Gastrocnemius medialis (tissue), 4 donors: ENCODE measurements at regions of chr16 and their contacts with region 1.

Region 1: GRCh38 chr16:86575754-86576557 is 2.4 kb upstream of the FOXL1 start:
- DNase-seq: peak; percentile 48 to 58
- ATAC-seq: peak; percentile 80 to 82
- H3K4me3 ChIP-seq: peak overlapping the region; percentile 46 to 70 (median 62)
- H3K27ac ChIP-seq: peak overlapping the region; percentile 64 to 78 (median 72)
- H3K4me1 ChIP-seq: peaks cover 0 to 4% of the 10 kb centered on the region in 2 donors
- H3K27me3 ChIP-seq: peaks cover 59 to 64% (median 62%) of the 10 kb centered on the region in 3 donors
- CTCF ChIP-seq: peak; percentile 39 to 83 (median 52)
- POLR2A ChIP-seq: peak; percentile 65 to 89

Region 2: DNA sequence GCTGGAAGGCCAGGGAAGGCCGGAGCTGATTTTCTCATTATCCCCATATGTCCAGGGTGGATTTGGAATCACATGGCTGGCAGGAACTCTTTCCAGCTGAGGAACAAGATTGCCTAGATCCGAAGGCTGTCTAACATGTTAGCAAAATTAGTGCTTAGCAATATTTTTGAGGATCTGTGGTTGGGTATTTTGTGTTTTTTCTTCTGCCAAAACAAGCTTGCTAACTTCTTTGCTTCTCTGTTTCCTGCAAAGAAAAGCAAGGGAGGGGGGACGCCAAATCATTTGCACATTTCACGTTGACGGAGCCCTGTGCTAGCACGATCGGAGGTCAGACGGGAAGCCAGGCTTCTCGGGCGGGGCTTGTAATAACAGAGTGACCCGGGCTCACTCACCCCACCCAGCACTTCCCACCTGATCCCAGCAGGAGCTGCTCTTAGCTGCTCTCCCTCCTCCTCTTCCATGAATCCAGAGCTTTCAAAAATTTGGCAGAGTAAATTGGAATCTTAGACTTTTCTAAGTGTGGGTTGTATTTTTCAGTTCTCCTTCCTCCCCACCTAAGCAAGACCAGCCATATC is 98.9 kb before region 1 on chr16:
- in situ Hi-C with region 1: no loop called
- intact Hi-C with region 1: no loop called
- DNase-seq: no peak
- ATAC-seq: no peak
- H3K4me3 ChIP-seq: no peak overlapping the region
- H3K27ac ChIP-seq: no peak overlapping the region
- H3K4me1 ChIP-seq: no peaks in the 10 kb centered on the region
- H3K27me3 ChIP-seq: peaks cover 31 to 71% (median 47%) of the 10 kb centered on the region in 3 donors
- CTCF ChIP-seq: no peak
- POLR2A ChIP-seq: no peak

Region 3: GRCh38 chr16:86609115-86609514 is 33.2 kb after region 1 on chr16:
- in situ Hi-C with region 1: no loop called
- intact Hi-C with region 1: loop called (anchors 2 kb)
- DNase-seq: no peak
- ATAC-seq: no peak
- H3K4me3 ChIP-seq: no peak overlapping the region
- H3K27ac ChIP-seq: peak overlapping the region; percentile 72 to 90 (median 80)
- H3K4me1 ChIP-seq: peaks cover 29 to 40% of the 10 kb centered on the region in 2 donors
- H3K27me3 ChIP-seq: no peaks in the 10 kb centered on the region
- CTCF ChIP-seq: no peak
- POLR2A ChIP-seq: no peak

Region 4: DNA sequence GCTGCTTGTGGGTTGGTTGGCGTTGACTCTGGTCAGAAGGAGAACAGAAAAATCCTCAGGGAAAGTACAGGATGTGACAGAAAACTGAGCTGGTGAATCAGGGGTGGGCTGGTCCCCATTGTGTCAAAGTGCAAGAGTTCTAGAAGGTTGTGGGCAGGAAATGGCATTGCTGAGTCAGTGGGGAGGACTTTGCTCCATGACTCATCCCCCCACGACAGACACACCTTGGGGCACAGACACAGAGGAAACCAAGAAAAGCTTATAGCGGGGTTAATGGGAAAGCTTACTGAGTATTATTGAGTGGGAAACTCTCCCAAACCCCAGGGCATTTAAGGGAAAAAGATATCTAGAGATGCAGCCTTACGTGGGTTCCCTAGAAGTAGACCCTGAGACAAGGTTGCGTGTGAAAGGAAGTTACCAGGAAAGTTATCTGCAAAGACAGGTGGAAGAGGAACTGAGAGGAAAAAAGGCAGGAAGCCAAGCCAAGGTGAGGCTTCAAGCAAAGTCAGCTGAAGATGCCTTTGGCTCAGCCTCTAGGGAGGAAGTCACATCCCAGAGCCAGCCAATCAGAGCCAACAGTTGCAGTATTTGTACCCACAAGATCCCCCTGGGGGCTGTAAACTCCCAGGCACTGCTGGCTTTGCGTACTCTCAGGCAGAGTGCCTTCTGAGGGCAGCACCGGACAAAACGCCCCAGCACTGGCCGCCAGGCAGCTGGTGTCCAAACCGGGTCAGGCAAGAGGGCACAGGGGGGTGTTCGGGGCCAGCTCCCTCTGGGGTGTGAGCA is 88.8 kb after region 1 on chr16:
- in situ Hi-C with region 1: no loop called
- intact Hi-C with region 1: loop called (anchors 5 kb)
- DNase-seq: peak; percentile 56 to 73
- ATAC-seq: peak; percentile 34 to 37
- H3K4me3 ChIP-seq: peak overlapping the region in 2 of 4 donors; percentile 29 to 37
- H3K27ac ChIP-seq: peak overlapping the region; percentile 82 to 96 (median 90)
- H3K4me1 ChIP-seq: peaks cover 55 to 93% of the 10 kb centered on the region in 2 donors
- H3K27me3 ChIP-seq: no peaks in the 10 kb centered on the region
- CTCF ChIP-seq: no peak
- POLR2A ChIP-seq: peak in 1 of 2 donors; percentile 26

Region 5: DNA sequence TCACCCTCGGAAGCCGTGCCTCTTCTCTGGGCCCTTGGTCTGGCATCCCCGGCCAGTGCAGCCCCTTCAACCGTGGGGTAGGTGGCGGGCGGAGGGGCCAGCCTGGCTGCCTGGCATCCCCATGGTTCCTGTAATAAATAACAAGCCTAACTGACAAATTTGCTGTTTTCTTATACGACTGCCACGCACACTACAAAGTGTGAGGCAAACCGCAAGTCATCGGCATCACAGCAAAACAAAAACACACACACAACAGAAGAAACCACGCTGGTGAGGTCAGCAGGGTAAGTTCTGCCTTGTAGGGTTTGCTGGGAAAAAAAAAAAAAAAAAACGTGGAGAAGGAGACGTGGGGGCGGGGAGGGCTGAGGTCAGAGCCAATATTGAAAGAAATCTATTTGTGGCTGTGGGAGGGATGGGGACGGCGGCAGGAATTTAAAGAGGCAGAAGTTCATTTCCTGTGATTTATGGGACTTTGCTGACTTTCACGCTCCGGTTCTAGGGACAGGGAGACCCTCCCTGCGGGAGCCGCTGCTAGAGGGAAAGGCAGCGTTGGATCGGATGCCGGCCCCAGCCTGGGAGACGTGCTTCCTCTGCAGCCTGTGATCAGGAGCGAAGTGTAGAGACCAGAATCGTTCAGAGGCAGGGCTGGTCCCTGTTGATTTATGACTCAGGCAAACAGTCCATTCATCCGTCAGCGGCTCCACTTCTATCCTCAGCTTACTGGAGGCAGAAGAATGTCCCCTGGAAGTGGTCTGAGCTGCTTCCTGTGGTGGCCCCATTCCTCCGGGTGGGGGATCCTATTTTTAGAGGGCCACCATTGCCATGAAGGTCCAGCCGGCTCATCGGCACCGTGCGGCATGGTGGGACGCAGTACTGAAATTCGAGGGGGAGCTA is 165.2 kb after region 1 on chr16:
- in situ Hi-C with region 1: no loop called
- intact Hi-C with region 1: loop called (anchors 5 kb)
- DNase-seq: peak; percentile 31 to 58
- ATAC-seq: peak; percentile 85 to 86
- H3K4me3 ChIP-seq: peak overlapping the region; percentile 43 to 56 (median 52)
- H3K27ac ChIP-seq: peak overlapping the region; percentile 77 to 88 (median 84)
- H3K4me1 ChIP-seq: peaks cover 9 to 19% of the 10 kb centered on the region in 2 donors
- H3K27me3 ChIP-seq: no peaks in the 10 kb centered on the region
- CTCF ChIP-seq: no peak
- POLR2A ChIP-seq: peak; percentile 16 to 37

Region 6: GRCh38 chr16:86761111-86762031 is 185.4 kb after region 1 on chr16:
- in situ Hi-C with region 1: loop called in 3 of 4 experiments (anchors 10 to 25 kb)
- intact Hi-C with region 1: loop called (anchors 2 kb)
- DNase-seq: no peak
- ATAC-seq: peak; percentile 53 to 62
- H3K4me3 ChIP-seq: no peak overlapping the region
- H3K27ac ChIP-seq: no peak overlapping the region
- H3K4me1 ChIP-seq: no peaks in the 10 kb centered on the region
- H3K27me3 ChIP-seq: peaks cover 19 to 58% (median 38%) of the 10 kb centered on the region in 3 donors
- CTCF ChIP-seq: peak; percentile 44 to 76 (median 72)
- POLR2A ChIP-seq: no peak

Region 7: GRCh38 chr16:86865524-86866301 is 289.8 kb after region 1 on chr16:
- in situ Hi-C with region 1: no loop called
- intact Hi-C with region 1: loop called (anchors 5 kb)
- DNase-seq: peak; percentile 62 to 78
- ATAC-seq: peak; percentile 88 to 93
- H3K4me3 ChIP-seq: no peak overlapping the region
- H3K27ac ChIP-seq: peak overlapping the region; percentile 41 to 62 (median 54)
- H3K4me1 ChIP-seq: peaks cover 8 to 15% of the 10 kb centered on the region in 2 donors
- H3K27me3 ChIP-seq: no peaks in the 10 kb centered on the region
- CTCF ChIP-seq: peak in 1 of 5 experiments; percentile 23
- POLR2A ChIP-seq: no peak